ENCODE measurements at regions of chr1 and their contacts with region 1.

Region 1: GRCh38 chr1:184386312-184387068 is at the start of gene C1orf21:
- DNase-seq: peak; percentile 96
- H3K4me3 ChIP-seq: peak within 1 kb of the TSS; percentile 83 to 98 (median 91)
- H3K27ac ChIP-seq: peak within 1 kb of the TSS; percentile 86 to 93 (median 92)
- H3K4me1 ChIP-seq: peaks cover 0 to 38% (median 22%) of the 10 kb centered on the region in 4 donors
- H3K27me3 ChIP-seq: no peaks in the 10 kb centered on the region
- CTCF ChIP-seq: no peak
- EP300 ChIP-seq: no peak
- POLR2A ChIP-seq: peak; percentile 65 to 75
- total RNA-seq, gene C1orf21: 56.2 to 80.3 (median 79.2) TPM

Region 2: GRCh38 chr1:184283999-184284398 is 102.5 kb before region 1 on chr1:
- intact Hi-C with region 1: loop called (anchors 5 kb)
- DNase-seq: peak; percentile 90
- H3K4me3 ChIP-seq: no peak overlapping the region
- H3K27ac ChIP-seq: peak overlapping the region; percentile 4 to 74 (median 70)
- H3K4me1 ChIP-seq: peaks cover 0 to 44% (median 26%) of the 10 kb centered on the region in 4 donors
- H3K27me3 ChIP-seq: no peaks in the 10 kb centered on the region
- CTCF ChIP-seq: no peak
- EP300 ChIP-seq: peak in 3 of 4 donors; percentile 45 to 69 (median 57)
- POLR2A ChIP-seq: no peak

Region 3: GRCh38 chr1:184483101-184483683 is 96.7 kb after region 1 on chr1:
- intact Hi-C with region 1: loop called (anchors 2 kb)
- DNase-seq: peak; percentile 88
- H3K4me3 ChIP-seq: no peak overlapping the region
- H3K27ac ChIP-seq: peak overlapping the region; percentile 68 to 79 (median 78)
- H3K4me1 ChIP-seq: peaks cover 0 to 73% (median 67%) of the 10 kb centered on the region in 4 donors
- H3K27me3 ChIP-seq: no peaks in the 10 kb centered on the region
- CTCF ChIP-seq: peak in 1 of 4 experiments; percentile 11
- EP300 ChIP-seq: peak in 2 of 4 donors; percentile 19 to 54
- POLR2A ChIP-seq: no peak

Region 4: GRCh38 chr1:184622136-184622823 is 235.8 kb after region 1 on chr1:
- intact Hi-C with region 1: loop called (anchors 5 kb)
- DNase-seq: peak; percentile 96
- H3K4me3 ChIP-seq: no peak overlapping the region
- H3K27ac ChIP-seq: peak overlapping the region; percentile 86 to 91 (median 90)
- H3K4me1 ChIP-seq: peaks cover 0 to 71% (median 39%) of the 10 kb centered on the region in 4 donors
- H3K27me3 ChIP-seq: no peaks in the 10 kb centered on the region
- CTCF ChIP-seq: no peak
- EP300 ChIP-seq: peak; percentile 95 to 99 (median 97)
- POLR2A ChIP-seq: no peak

Measured in sigmoid colon (tissue), 7 donors.